ENCODE measurements at regions of chr2 and their contacts with region 1.

Region 1: DNA sequence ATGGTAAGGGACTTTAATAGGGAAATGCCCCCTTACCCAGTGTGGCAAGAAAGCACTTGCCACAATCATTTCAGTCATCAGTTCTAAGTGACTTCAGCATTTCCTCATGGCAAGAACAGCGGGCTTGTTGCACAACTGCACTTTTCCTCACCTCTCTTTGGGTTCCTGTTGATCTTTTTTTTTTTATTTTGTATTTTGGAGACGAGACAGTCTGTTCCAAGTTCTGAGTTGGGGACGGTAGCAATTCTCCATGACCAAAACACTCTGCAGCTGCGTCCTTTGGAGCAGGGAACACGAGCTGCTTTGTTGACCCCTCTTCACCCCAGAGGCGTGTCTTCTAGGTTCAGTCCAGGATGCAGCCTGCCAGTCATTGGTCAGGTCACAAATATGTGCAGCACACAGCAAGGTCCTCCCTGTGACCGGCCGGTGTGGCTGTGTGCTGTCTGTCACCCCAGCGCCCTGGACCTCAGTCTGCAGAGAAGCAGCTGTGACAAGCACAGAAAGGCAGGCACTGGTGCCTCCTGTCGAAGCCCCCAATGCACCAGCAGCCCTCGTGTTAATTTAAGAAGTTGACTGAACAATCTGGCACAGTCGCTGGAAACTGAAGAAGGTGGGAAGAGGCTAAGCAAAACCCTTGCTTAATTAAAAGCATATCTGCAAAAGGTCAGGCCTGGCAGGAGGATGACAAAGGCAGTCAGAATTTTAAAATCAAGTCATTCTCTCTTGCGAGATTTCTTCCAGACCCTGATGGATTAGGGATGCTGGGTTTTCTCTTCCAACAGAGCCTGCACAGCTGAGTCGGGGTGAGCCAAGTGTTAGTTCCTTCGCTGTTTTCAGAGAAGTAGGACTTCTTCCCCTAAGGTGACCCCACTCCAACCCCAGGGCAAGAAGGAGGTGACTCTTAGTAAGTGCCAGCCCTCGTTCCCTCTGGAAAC is 96.7 kb upstream of the COPS8 start:
- DNase-seq: peak; percentile 84 to 92
- ATAC-seq: peak; percentile 89 to 92
- H3K4me3 ChIP-seq: peak overlapping the region in 2 of 4 donors; percentile 8 to 16
- H3K27ac ChIP-seq: peak overlapping the region; percentile 71 to 85 (median 81)
- H3K4me1 ChIP-seq: peaks cover 18 to 38% of the 10 kb centered on the region in 2 donors
- H3K27me3 ChIP-seq: no peaks in the 10 kb centered on the region
- CTCF ChIP-seq: no peak
- POLR2A ChIP-seq: peak; percentile 47 to 71

Region 2: GRCh38 chr2:236642584-236643291 is 346.2 kb before region 1 on chr2:
- in situ Hi-C with region 1: no loop called
- intact Hi-C with region 1: loop called (anchors 5 kb)
- DNase-seq: peak; percentile 78 to 91
- ATAC-seq: peak; percentile 85
- H3K4me3 ChIP-seq: no peak overlapping the region
- H3K27ac ChIP-seq: peak overlapping the region; percentile 58 to 71 (median 66)
- H3K4me1 ChIP-seq: no peaks in the 10 kb centered on the region
- H3K27me3 ChIP-seq: peaks cover 0 to 3% (median 0%) of the 10 kb centered on the region in 3 donors
- CTCF ChIP-seq: no peak
- POLR2A ChIP-seq: peak in 1 of 2 donors; percentile 2

Region 3: DNA sequence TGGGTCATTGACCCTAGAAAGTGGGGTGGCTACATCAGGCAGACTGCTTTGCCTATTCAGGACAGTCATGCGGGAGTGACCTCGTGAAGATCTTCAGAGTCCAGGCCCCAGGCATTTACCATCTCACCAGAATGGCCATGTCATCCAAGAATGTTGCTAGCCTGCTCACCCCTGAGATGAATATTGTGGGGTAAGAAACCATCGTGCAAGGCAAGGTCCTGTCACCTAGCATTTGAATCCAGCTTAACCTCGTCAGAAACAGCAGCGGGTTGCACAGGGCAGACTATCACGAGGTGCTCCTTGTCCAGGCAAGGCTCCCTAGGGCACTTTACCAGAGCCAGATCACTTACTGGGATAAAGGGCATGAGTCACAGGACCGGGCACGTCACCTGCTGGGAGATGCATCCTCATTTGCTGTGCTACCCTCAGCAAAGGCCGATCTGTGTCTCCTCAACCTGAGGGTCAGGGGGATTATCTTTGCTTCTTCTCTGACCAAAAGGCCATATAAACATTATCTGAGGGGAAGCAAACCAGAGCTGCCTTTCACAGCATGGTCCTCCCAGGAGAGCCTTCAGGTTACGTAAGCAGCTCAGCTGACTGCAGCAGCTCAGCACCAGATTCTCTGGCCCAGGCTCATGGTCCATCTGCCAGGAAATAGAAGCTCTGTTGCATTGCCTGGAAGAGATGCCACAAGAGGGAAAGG is 256.9 kb before region 1 on chr2:
- in situ Hi-C with region 1: no loop called
- intact Hi-C with region 1: loop called (anchors 1 kb)
- DNase-seq: peak; percentile 85 to 96
- ATAC-seq: peak; percentile 93 to 95
- H3K4me3 ChIP-seq: peak overlapping the region in 1 of 4 donors; percentile 16
- H3K27ac ChIP-seq: peak overlapping the region; percentile 89 to 92 (median 90)
- H3K4me1 ChIP-seq: peaks cover 29 to 31% of the 10 kb centered on the region in 2 donors
- H3K27me3 ChIP-seq: no peaks in the 10 kb centered on the region
- CTCF ChIP-seq: peak in 1 of 5 experiments; percentile 15
- POLR2A ChIP-seq: no peak

Region 4: DNA sequence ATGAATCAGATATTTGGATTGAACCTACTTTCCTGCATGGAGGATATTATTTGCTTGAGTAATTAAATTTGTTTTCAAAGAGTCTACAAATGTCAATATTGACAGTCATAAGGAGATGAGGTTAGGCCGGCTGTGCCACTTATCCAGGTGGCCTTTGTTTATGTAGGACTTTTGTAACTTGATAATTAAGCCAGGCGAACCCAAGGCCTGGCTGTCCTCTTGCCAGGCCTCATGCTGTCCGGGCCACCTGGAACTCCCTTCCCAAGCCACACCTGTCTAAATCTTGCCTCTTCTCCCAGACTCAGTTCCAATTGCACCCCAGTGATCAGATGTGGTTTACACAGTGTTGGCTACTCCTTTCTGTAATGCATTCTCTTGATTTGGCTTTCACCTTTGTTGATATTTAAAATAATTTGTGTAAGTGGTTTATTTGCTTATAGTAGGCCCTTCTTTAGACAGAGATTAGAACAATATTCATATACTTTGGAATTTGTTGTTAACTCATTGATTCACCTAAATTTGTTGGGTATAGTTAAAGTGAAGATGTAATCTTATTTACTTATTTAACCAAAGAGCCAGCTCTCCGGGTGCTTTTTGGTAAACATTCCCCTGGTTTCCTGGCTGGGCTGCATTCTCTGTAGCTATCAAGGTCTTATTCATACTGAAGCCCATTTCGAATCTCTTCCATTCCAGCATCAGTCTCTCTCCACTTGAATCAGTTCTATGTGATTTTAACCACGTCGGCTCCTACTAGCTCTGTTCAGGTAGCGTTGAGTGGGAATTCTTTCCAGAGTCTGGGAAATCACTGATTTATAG is 163.9 kb before region 1 on chr2:
- in situ Hi-C with region 1: no loop called
- intact Hi-C with region 1: loop called (anchors 1 kb)
- DNase-seq: peak; percentile 20 to 51
- ATAC-seq: peak in 1 of 2 donors; percentile 70
- H3K4me3 ChIP-seq: no peak overlapping the region
- H3K27ac ChIP-seq: peak overlapping the region in 3 of 4 donors; percentile 23 to 49 (median 39)
- H3K4me1 ChIP-seq: peaks cover 11 to 20% of the 10 kb centered on the region in 2 donors
- H3K27me3 ChIP-seq: no peaks in the 10 kb centered on the region
- CTCF ChIP-seq: no peak
- POLR2A ChIP-seq: no peak

Region 5: DNA sequence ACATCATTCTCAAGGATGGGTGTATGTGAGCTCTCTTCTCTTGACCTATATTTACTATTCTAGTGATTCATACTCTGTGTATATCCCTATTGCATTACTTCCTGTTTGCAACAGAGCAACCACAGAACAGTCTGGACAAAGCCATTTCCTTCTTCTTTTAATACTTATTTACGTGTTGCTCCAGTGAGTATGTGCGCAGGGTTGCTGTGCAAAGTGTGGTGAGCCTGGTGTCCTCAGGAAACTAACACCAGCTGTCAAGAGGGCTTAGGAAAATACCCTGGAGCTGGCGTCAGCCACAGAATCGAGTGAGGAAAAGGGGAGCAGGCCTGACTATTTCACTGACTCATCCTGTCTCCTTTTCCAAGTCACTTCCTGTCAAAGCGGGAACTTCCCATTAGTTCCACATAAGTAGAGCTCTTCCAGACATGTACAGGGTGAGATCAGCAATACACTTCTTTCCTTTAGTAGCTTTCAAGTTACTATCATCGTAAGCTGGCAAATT is 117.4 kb before region 1 on chr2:
- in situ Hi-C with region 1: no loop called
- intact Hi-C with region 1: loop called (anchors 1 kb)
- DNase-seq: peak; percentile 41 to 68
- ATAC-seq: peak; percentile 79 to 83
- H3K4me3 ChIP-seq: no peak overlapping the region
- H3K27ac ChIP-seq: peak overlapping the region; percentile 42 to 67 (median 54)
- H3K4me1 ChIP-seq: peaks cover 0 to 15% of the 10 kb centered on the region in 2 donors
- H3K27me3 ChIP-seq: no peaks in the 10 kb centered on the region
- CTCF ChIP-seq: no peak
- POLR2A ChIP-seq: no peak

Region 6: GRCh38 chr2:236972491-236973342 is 16.2 kb before region 1 on chr2:
- in situ Hi-C with region 1: no loop called
- intact Hi-C with region 1: no loop called
- DNase-seq: peak; percentile 57 to 80
- ATAC-seq: peak; percentile 68 to 73
- H3K4me3 ChIP-seq: no peak overlapping the region
- H3K27ac ChIP-seq: peak overlapping the region; percentile 42 to 66 (median 61)
- H3K4me1 ChIP-seq: no peaks in the 10 kb centered on the region
- H3K27me3 ChIP-seq: peaks cover 0 to 11% (median 0%) of the 10 kb centered on the region in 3 donors
- CTCF ChIP-seq: no peak
- POLR2A ChIP-seq: no peak

Region 7: GRCh38 chr2:237085248-237086221 is 96.6 kb after region 1 on chr2 and contains the start of gene COPS8:
- in situ Hi-C with region 1: no loop called
- intact Hi-C with region 1: loop called (anchors 1 kb)
- DNase-seq: peak; percentile 93 to 95
- ATAC-seq: peak; percentile 87 to 94
- H3K4me3 ChIP-seq: peak within 1 kb of the TSS; percentile 76 to 94 (median 77)
- H3K27ac ChIP-seq: peak within 1 kb of the TSS; percentile 93 to 95 (median 94)
- H3K4me1 ChIP-seq: peaks cover 46 to 51% of the 10 kb centered on the region in 2 donors
- H3K27me3 ChIP-seq: no peaks in the 10 kb centered on the region
- CTCF ChIP-seq: peak; percentile 30 to 47 (median 44)
- POLR2A ChIP-seq: peak; percentile 99
- total RNA-seq, gene COPS8: 353 to 709 (median 642) TPM

Region 8: DNA sequence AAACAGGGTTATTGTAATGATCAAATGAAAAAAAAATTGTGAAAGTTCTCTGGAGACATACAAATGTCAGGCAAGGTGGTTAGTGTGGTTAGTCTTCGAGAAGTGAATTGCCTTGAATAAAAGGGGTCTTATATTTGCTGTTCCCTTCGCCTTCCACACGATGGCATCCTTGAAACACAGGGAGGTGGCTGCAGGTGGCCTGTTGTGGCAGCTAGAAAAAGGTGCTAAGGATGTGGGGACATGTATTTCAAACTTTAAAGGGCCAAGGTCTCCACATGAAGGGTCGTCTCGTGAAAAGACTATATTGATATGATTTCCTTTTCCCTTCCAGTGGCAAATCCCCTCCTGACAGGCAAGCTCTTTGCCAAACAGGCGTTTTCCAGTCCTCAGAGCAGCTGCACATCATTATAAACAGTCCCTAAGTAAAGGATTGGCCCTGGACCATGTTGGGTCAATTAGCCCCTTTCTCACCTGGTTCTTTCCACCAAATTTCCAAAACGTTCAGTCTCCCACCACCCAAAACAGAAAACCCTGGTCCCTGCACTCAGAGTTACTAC is 165.2 kb after region 1 on chr2:
- in situ Hi-C with region 1: no loop called
- intact Hi-C with region 1: loop called (anchors 10 kb)
- DNase-seq: no peak
- ATAC-seq: peak in 1 of 2 donors; percentile 29
- H3K4me3 ChIP-seq: no peak overlapping the region
- H3K27ac ChIP-seq: peak overlapping the region; percentile 66 to 81 (median 78)
- H3K4me1 ChIP-seq: peaks cover 2 to 8% of the 10 kb centered on the region in 2 donors
- H3K27me3 ChIP-seq: no peaks in the 10 kb centered on the region
- CTCF ChIP-seq: peak; percentile 43 to 55 (median 50)
- POLR2A ChIP-seq: no peak

Measured in gastrocnemius medialis (tissue), 4 donors.